ENCODE measurements at regions of chr4 and their contacts with region 1.

Region 1: GRCh38 chr4:99563310-99564186 is at the start of gene TRMT10A:
- DNase-seq: peak; percentile 98 to 99 (median 99)
- ATAC-seq: peak; percentile 99
- H3K4me3 ChIP-seq: peak within 1 kb of the TSS; percentile 38 to 74 (median 62)
- H3K27ac ChIP-seq: peak within 1 kb of the TSS; percentile 87 to 98 (median 94)
- H3K4me1 ChIP-seq: peaks cover 0 to 13% (median 8%) of the 10 kb centered on the region in 12 donors
- H3K27me3 ChIP-seq: peaks cover 0 to 10% (median 0%) of the 10 kb centered on the region in 9 donors
- CTCF ChIP-seq: peak in 6 of 12 donors; percentile 6 to 27 (median 16)
- POLR2A ChIP-seq: peak in 1 of 2 donors; percentile 46
- total RNA-seq, gene TRMT10A: 1.8 to 5.1 (median 4.1) TPM

Region 2: GRCh38 chr4:99615170-99615820 is 51.7 kb after region 1 on chr4:
- intact Hi-C with region 1: loop called in 1 of 10 experiments (anchors 5 kb)
- DNase-seq: peak in 3 of 5 donors; percentile 18 to 39 (median 33)
- ATAC-seq: peak; percentile 83 to 93 (median 92)
- H3K4me3 ChIP-seq: no peak overlapping the region
- H3K27ac ChIP-seq: peak overlapping the region in 7 of 12 donors; percentile 7 to 60 (median 27)
- H3K4me1 ChIP-seq: peaks cover 0 to 9% (median 0%) of the 10 kb centered on the region in 12 donors
- H3K27me3 ChIP-seq: no peaks in the 10 kb centered on the region
- CTCF ChIP-seq: peak in 6 of 12 donors; percentile 12 to 41 (median 18)
- POLR2A ChIP-seq: no peak

Region 3: GRCh38 chr4:99655308-99656081 is 91.9 kb after region 1 on chr4:
- intact Hi-C with region 1: loop called in 2 of 10 experiments (anchors 5 kb)
- DNase-seq: peak; percentile 53 to 68 (median 59)
- ATAC-seq: peak; percentile 62 to 82 (median 72)
- H3K4me3 ChIP-seq: no peak overlapping the region
- H3K27ac ChIP-seq: peak overlapping the region in 11 of 12 donors; percentile 8 to 73 (median 56)
- H3K4me1 ChIP-seq: peaks cover 0 to 32% (median 5%) of the 10 kb centered on the region in 12 donors
- H3K27me3 ChIP-seq: no peaks in the 10 kb centered on the region
- CTCF ChIP-seq: no peak
- POLR2A ChIP-seq: no peak

Region 4: DNA sequence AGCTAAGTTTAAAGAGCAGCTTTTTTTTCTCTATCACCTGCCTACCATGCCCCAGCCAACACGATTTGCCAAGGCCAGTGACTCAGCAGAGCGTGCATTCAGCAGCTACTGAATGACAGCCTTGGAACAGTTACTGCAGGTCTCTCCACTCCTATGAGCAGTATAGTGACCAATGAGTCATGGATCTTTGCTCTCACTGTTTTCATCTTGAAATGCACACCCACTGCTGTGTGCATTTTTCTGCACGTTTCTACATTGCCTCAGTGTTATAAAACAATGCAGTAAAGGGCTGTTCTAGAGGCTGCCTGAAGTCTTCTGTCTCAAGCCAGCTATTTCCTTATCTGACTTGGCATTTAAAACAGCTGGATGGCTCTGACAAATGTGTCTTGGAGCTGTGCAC is 160.1 kb after region 1 on chr4:
- intact Hi-C with region 1: loop called in 7 of 10 experiments (anchors 5 kb)
- DNase-seq: peak in 4 of 5 donors; percentile 55 to 78 (median 67)
- ATAC-seq: peak; percentile 78 to 99 (median 96)
- H3K4me3 ChIP-seq: no peak overlapping the region
- H3K27ac ChIP-seq: peak overlapping the region in 11 of 12 donors; percentile 1 to 77 (median 64)
- H3K4me1 ChIP-seq: peaks cover 0 to 27% (median 14%) of the 10 kb centered on the region in 12 donors
- H3K27me3 ChIP-seq: no peaks in the 10 kb centered on the region
- CTCF ChIP-seq: no peak
- POLR2A ChIP-seq: no peak

Region 5: DNA sequence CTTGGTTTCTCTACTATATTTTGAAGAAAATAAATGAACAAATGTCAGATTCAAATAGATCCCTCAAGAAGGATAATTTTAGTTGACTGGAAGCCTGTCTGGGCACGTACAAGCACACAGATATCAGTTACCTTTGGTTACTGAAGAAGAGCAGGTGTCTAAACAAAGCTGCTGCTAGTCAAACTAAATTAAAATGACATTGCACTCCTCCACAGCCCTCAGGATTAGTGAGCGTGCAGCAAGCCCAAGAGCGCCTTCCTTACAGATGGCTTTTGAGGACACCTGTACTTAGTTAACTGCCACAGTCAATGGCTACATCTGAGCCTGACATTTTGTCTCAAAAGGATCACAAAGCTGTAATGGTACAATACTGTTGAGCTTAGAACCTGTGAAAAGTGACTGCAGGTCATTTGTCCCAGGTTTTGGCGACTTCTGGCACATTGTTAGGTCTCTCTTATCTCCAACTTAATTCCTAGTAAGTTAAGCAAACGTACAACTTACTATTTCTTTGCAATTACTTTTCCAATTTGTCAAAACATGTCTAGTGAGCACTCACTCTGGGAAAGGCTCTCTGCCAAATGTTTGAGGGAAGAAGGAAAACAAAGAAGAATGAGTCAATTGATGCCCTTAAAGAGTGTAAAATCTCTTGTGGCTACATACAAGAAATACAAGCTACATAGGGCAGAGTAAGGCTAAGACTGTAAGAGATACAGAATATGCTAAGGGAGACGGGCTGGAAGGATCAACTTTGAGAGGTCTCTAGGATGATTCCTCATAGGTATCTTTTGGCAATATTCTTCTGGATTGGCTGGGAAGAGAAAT is 227.5 kb after region 1 on chr4:
- intact Hi-C with region 1: no loop called
- DNase-seq: no peak
- ATAC-seq: no peak
- H3K4me3 ChIP-seq: no peak overlapping the region
- H3K27ac ChIP-seq: no peak overlapping the region
- H3K4me1 ChIP-seq: no peaks in the 10 kb centered on the region
- H3K27me3 ChIP-seq: no peaks in the 10 kb centered on the region
- CTCF ChIP-seq: no peak
- POLR2A ChIP-seq: no peak

Region 6: GRCh38 chr4:99885063-99885664 is 321.6 kb after region 1 on chr4:
- intact Hi-C with region 1: loop called in 8 of 10 experiments (anchors 5 to 10 kb)
- DNase-seq: no peak
- ATAC-seq: no peak
- H3K4me3 ChIP-seq: no peak overlapping the region
- H3K27ac ChIP-seq: no peak overlapping the region
- H3K4me1 ChIP-seq: peaks cover 0 to 10% (median under 1%) of the 10 kb centered on the region in 12 donors
- H3K27me3 ChIP-seq: no peaks in the 10 kb centered on the region
- CTCF ChIP-seq: peak; percentile 23 to 58 (median 40)
- POLR2A ChIP-seq: no peak

Region 7: DNA sequence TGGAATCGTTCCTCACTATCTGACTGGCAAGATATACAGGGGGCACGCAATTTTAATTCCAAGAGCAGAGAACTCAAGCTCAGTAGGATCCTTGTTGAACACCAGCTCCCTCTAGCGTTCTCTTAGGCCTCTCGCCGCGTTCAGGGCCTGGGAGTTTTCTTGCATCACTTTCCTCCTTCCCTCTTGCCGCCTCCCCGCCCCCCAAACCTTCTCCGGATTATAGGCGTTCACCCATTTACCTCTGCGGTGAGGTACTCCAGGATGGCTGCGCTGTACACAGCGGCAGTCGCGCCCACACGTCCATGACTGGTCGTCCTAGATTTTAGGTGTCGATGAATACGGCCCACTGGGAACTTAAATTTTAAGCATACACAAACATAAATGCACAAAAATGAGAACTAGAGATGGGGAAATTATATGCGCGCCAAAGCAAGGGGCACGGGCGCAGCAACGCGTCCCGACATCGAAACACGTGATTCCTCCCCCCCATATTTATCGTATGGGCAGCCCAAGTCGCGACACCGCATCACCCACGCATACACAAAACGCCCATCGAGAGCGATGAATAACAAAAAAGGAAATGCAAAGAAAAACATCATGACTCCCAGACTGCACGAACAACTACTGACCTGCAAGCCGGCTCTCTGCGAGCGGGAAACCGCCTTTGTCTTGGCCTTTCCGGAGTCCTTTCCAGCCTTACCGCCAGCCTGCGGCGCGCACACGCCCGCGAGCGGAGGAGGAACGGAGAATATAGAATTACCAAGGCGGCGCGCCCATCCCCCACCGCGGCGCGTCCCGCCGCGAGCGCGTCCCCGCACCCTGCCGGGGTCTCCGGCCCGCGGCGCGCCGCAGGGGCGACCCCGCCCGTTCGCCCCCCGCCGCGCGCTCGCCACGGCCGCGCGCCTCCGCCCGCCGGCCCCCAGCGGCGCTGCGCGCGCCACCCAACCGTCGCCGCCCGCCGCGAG is 385.8 kb after region 1 on chr4:
- intact Hi-C with region 1: loop called (anchors 1 to 5 kb)
- DNase-seq: peak; percentile 84 to 90 (median 86)
- ATAC-seq: peak; percentile 14 to 48 (median 33)
- H3K4me3 ChIP-seq: peak overlapping the region; percentile 68 to 97 (median 85)
- H3K27ac ChIP-seq: peak overlapping the region; percentile 31 to 96 (median 88)
- H3K4me1 ChIP-seq: peaks cover 0 to 47% (median 33%) of the 10 kb centered on the region in 12 donors
- H3K27me3 ChIP-seq: no peaks in the 10 kb centered on the region
- CTCF ChIP-seq: peak; percentile 70 to 92 (median 84)
- POLR2A ChIP-seq: no peak